B cell (primary cell): ENCODE measurements at regions of chr14 and their contacts with region 1.

Region 1: GRCh38 chr14:24146978-24147760 is at the start of gene RNF31:
- DNase-seq: peak; percentile 98
- ATAC-seq: peak; percentile 84
- H3K4me3 ChIP-seq: peak within 1 kb of the TSS; percentile 83 to 95 (median 94)
- H3K4me3 Mint-ChIP-seq: peak within 1 kb of the TSS; percentile 95
- H3K27ac ChIP-seq: peak within 1 kb of the TSS; percentile 77 to 90
- H3K27ac Mint-ChIP-seq: peak within 1 kb of the TSS; percentile 95
- H3K4me1 ChIP-seq: peaks cover 21 to 35% of the 10 kb centered on the region in 2 donors
- H3K4me1 Mint-ChIP-seq: peaks cover 50% of the 10 kb centered on the region
- H3K27me3 ChIP-seq: no peaks in the 10 kb centered on the region
- H3K27me3 Mint-ChIP-seq: no peaks in the 10 kb centered on the region
- CTCF ChIP-seq: no peak
- total RNA-seq, gene RNF31: 103 and 114 TPM in 2 replicates

Region 2: GRCh38 chr14:23089498-23090253 is 1057.5 kb before region 1 on chr14:
- CTCF ChIA-PET with region 1: no interaction called
- POLR2A ChIA-PET with region 1: interaction called, 13 read pairs
- intact Hi-C with region 1: loop called (anchors 10 kb)
- DNase-seq: no peak
- ATAC-seq: no peak
- H3K4me3 ChIP-seq: no peak overlapping the region
- H3K4me3 Mint-ChIP-seq: no peak overlapping the region
- H3K27ac ChIP-seq: no peak overlapping the region
- H3K27ac Mint-ChIP-seq: no peak overlapping the region
- H3K4me1 ChIP-seq: peaks cover 12 to 13% of the 10 kb centered on the region in 2 donors
- H3K4me1 Mint-ChIP-seq: peaks cover 14% of the 10 kb centered on the region
- H3K27me3 ChIP-seq: no peaks in the 10 kb centered on the region
- H3K27me3 Mint-ChIP-seq: no peaks in the 10 kb centered on the region
- CTCF ChIP-seq: no peak

Region 3: GRCh38 chr14:24122898-24123297 is 24.3 kb before region 1 on chr14:
- CTCF ChIA-PET with region 1: no interaction called
- POLR2A ChIA-PET with region 1: interaction called, 11 read pairs
- intact Hi-C with region 1: no loop called
- DNase-seq: no peak
- ATAC-seq: no peak
- H3K4me3 ChIP-seq: no peak overlapping the region
- H3K4me3 Mint-ChIP-seq: no peak overlapping the region
- H3K27ac ChIP-seq: peak overlapping the region; percentile 30 to 92
- H3K27ac Mint-ChIP-seq: peak overlapping the region; percentile 91
- H3K4me1 ChIP-seq: peaks cover 30 to 31% of the 10 kb centered on the region in 2 donors
- H3K4me1 Mint-ChIP-seq: peaks cover 32% of the 10 kb centered on the region
- H3K27me3 ChIP-seq: no peaks in the 10 kb centered on the region
- H3K27me3 Mint-ChIP-seq: no peaks in the 10 kb centered on the region
- CTCF ChIP-seq: no peak

Region 4: DNA sequence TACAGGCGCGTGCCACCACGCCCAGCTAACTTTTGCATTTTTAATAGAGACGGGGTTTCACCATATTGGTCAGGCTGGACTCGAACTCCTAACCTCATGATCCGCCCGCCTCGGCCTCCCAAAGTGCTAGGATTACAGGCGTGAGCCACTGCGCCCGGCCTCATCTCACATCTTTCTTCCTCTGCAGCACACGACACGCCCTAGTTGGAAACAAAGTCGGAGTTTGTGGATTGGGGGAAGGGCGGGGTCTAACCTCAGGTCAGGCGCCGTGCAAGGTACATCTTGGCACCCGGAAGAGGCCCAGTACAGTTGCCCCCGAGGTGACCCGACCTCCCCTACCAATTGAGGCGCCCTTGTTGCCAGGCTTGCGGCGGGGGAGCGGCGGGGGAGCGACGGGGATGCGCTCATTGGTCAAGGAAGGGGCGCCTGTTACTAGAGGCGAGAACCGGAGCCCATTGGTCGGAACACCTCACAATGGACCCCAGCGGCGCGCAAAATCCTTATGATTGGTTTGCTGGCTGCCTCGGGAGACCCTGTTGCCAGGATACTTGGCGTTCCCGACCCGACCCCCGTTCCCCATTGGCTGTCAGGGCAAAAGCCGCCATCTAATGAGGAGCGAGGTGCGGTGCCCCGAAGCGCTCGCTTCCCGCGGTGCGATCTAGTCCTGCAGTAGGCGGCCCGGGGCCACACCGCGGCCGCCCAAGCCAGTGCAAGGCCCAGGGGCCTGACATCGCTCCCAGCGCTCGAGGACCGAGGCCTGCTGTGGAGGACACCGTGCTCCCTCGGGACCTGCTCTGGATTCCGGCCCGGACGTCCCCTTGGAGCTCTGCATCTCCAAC is 24.5 kb after region 1 on chr14 and contains the start of gene REC8:
- CTCF ChIA-PET with region 1: no interaction called
- POLR2A ChIA-PET with region 1: interaction called, 4 read pairs
- intact Hi-C with region 1: loop called (anchors 1 kb)
- DNase-seq: peak; percentile 89
- ATAC-seq: peak; percentile 92
- H3K4me3 ChIP-seq: peak within 1 kb of the TSS; percentile 47 to 72 (median 60)
- H3K4me3 Mint-ChIP-seq: peak within 1 kb of the TSS; percentile 93
- H3K27ac ChIP-seq: no peak within 1 kb of the TSS
- H3K27ac Mint-ChIP-seq: peak within 1 kb of the TSS; percentile 79
- H3K4me1 ChIP-seq: peaks cover 11 to 23% of the 10 kb centered on the region in 2 donors
- H3K4me1 Mint-ChIP-seq: peaks cover 20% of the 10 kb centered on the region
- H3K27me3 ChIP-seq: no peaks in the 10 kb centered on the region
- H3K27me3 Mint-ChIP-seq: no peaks in the 10 kb centered on the region
- CTCF ChIP-seq: no peak
- total RNA-seq, gene REC8: 48.4 and 62.1 TPM in 2 replicates

Region 5: GRCh38 chr14:24195191-24196070 is 48.3 kb after region 1 on chr14 and contains the start of gene TM9SF1:
- CTCF ChIA-PET with region 1: interaction called, 4 read pairs
- POLR2A ChIA-PET with region 1: interaction called, 13 read pairs
- intact Hi-C with region 1: no loop called
- DNase-seq: peak; percentile 96
- ATAC-seq: peak; percentile 90
- H3K4me3 ChIP-seq: peak within 1 kb of the TSS; percentile 82 to 99 (median 83)
- H3K4me3 Mint-ChIP-seq: peak within 1 kb of the TSS; percentile 89
- H3K27ac ChIP-seq: peak within 1 kb of the TSS; percentile 98 to 99
- H3K27ac Mint-ChIP-seq: peak within 1 kb of the TSS; percentile 99
- H3K4me1 ChIP-seq: peaks cover 25 to 26% of the 10 kb centered on the region in 2 donors
- H3K4me1 Mint-ChIP-seq: peaks cover 49% of the 10 kb centered on the region
- H3K27me3 ChIP-seq: no peaks in the 10 kb centered on the region
- H3K27me3 Mint-ChIP-seq: no peaks in the 10 kb centered on the region
- CTCF ChIP-seq: no peak
- total RNA-seq, gene TM9SF1: 24.5 and 33.9 TPM in 2 replicates

Region 6: GRCh38 chr14:24442273-24443052 is 295.3 kb after region 1 on chr14 and contains the start of gene SDR39U1:
- CTCF ChIA-PET with region 1: no interaction called
- POLR2A ChIA-PET with region 1: no interaction called
- intact Hi-C with region 1: loop called (anchors 2 kb)
- DNase-seq: peak; percentile 99
- ATAC-seq: peak; percentile 89
- H3K4me3 ChIP-seq: peak within 1 kb of the TSS; percentile 86 to 98 (median 94)
- H3K4me3 Mint-ChIP-seq: peak within 1 kb of the TSS; percentile 97
- H3K27ac ChIP-seq: peak within 1 kb of the TSS; percentile 96
- H3K27ac Mint-ChIP-seq: peak within 1 kb of the TSS; percentile 98
- H3K4me1 ChIP-seq: peaks cover 20 to 29% of the 10 kb centered on the region in 2 donors
- H3K4me1 Mint-ChIP-seq: peaks cover 48% of the 10 kb centered on the region
- H3K27me3 ChIP-seq: no peaks in the 10 kb centered on the region
- H3K27me3 Mint-ChIP-seq: no peaks in the 10 kb centered on the region
- CTCF ChIP-seq: no peak
- total RNA-seq, gene SDR39U1: 107 and 126 TPM in 2 replicates